ENCODE measurements at regions of chr13 and their contacts with region 1.

Region 1: DNA sequence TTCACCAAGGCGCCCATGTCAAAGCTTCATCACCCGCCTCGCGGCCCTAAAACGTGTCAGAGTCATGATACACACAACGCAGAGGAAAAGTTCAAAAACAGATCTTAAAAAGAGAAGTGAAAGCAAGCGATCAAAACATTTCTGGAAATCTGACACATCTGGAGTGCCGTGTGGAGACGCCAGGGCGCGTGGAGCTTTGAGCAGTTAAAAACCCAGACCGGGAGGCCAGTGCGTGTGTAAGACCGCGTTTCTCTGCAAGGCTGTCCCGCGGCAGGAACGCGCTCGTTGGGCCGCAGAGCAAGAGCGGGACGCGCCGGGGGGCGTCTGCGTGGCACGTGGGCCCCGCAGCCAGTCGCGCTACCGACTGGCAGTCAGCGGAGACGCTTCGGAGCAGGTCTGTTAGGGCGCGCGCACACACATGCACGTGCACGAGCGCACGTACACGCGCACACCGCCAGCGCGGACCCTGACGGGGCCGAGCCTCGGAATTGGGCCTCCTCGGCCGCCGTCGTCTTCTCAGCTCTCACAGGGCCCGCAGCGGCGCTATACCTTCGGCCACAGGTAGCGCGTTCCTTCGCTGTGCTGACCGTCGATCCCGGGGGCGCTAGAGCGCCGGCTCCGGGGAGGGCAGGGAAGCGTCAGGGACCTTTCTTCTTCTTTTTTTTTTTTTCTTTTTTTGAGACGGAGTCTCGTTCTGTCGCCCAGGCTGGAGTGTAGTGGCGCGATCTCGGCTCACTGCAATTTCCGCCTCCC is 35.8 kb downstream of the RNF6 start:
- DNase-seq: peak; percentile 66
- ATAC-seq: peak; percentile 93
- H3K4me3 ChIP-seq: peak overlapping the region; percentile 74
- H3K27ac ChIP-seq: peak overlapping the region; percentile 39
- H3K4me1 ChIP-seq: peaks cover 9% of the 10 kb centered on the region
- H3K27me3 ChIP-seq: no peaks in the 10 kb centered on the region
- CTCF ChIP-seq: peak; percentile 54 to 65 (median 60)
- EP300 ChIP-seq: no peak
- POLR2A ChIP-seq: peak; percentile 90
- RAD21 ChIP-seq: peak; percentile 49

Region 2: DNA sequence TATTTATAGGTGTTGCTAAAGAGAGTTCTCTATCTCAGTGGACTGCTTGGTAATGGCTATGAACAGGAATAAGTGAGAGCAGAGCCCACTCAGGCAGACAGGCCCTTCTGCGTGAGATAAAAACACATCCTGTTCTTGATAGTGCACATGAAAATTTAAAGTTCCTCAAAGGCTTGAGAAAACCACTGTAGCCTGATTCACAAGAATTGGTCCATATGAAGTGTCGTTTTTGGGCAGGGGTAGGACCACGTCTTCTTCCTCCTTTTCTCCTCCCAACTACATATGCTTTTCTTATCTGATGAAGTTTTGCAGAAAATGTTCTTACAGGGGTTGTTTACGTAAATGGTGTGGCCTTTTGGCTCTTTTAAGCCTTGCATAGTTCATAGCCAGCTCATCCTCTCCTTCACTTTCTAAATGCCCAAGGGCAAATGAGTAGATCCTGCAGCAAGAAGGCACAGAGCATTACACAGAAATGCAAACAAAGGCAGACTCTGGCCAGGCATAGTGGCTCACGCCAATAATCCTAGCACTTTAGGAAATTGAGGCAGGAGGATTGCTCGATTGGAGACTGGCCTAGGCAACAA is 18.0 kb before region 1 on chr13:
- CTCF ChIA-PET with region 1: interaction called, 10 read pairs
- POLR2A ChIA-PET with region 1: no interaction called
- RAD21 ChIA-PET with region 1: no interaction called
- SMC1A ChIA-PET with region 1: interaction called, 4 read pairs
- in situ Hi-C with region 1: no loop called
- intact Hi-C with region 1: no loop called
- DNase-seq: no peak
- ATAC-seq: no peak
- H3K4me3 ChIP-seq: no peak overlapping the region
- H3K27ac ChIP-seq: no peak overlapping the region
- H3K4me1 ChIP-seq: no peaks in the 10 kb centered on the region
- H3K27me3 ChIP-seq: peaks cover 0 to 1% of the 10 kb centered on the region in 2 experiments; a peak in 1 of 4 replicates
- CTCF ChIP-seq: no peak
- EP300 ChIP-seq: no peak
- POLR2A ChIP-seq: no peak
- RAD21 ChIP-seq: no peak

Region 3: GRCh38 chr13:26221721-26222519 is 35.6 kb after region 1 on chr13 and contains the start of gene RNF6:
- CTCF ChIA-PET with region 1: interaction called, 48 read pairs
- POLR2A ChIA-PET with region 1: interaction called, 3 read pairs
- RAD21 ChIA-PET with region 1: interaction called, 4 read pairs
- SMC1A ChIA-PET with region 1: interaction called, 3 read pairs
- in situ Hi-C with region 1: no loop called
- intact Hi-C with region 1: loop called (anchors 2 kb)
- DNase-seq: peak; percentile 96
- ATAC-seq: peak; percentile 98
- H3K4me3 ChIP-seq: peak within 1 kb of the TSS; percentile 86
- H3K27ac ChIP-seq: peak within 1 kb of the TSS; percentile 99
- H3K4me1 ChIP-seq: peaks cover 4% of the 10 kb centered on the region
- H3K27me3 ChIP-seq: no peaks in the 10 kb centered on the region; a peak in 1 of 4 replicates
- CTCF ChIP-seq: no peak
- EP300 ChIP-seq: no peak
- POLR2A ChIP-seq: peak; percentile 97
- RAD21 ChIP-seq: no peak
- polyA plus RNA-seq, gene RNF6: 19.0 to 26.8 TPM

Region 4: GRCh38 chr13:26390203-26390602 is 203.9 kb after region 1 on chr13:
- CTCF ChIA-PET with region 1: interaction called, 12 read pairs
- POLR2A ChIA-PET with region 1: no interaction called
- RAD21 ChIA-PET with region 1: interaction called, 3 read pairs
- SMC1A ChIA-PET with region 1: no interaction called
- in situ Hi-C with region 1: no loop called
- intact Hi-C with region 1: no loop called
- DNase-seq: no peak
- ATAC-seq: no peak
- H3K4me3 ChIP-seq: no peak overlapping the region
- H3K27ac ChIP-seq: no peak overlapping the region
- H3K4me1 ChIP-seq: no peaks in the 10 kb centered on the region
- H3K27me3 ChIP-seq: no peaks in the 10 kb centered on the region
- CTCF ChIP-seq: no peak
- EP300 ChIP-seq: no peak
- POLR2A ChIP-seq: no peak
- RAD21 ChIP-seq: no peak

Region 5: DNA sequence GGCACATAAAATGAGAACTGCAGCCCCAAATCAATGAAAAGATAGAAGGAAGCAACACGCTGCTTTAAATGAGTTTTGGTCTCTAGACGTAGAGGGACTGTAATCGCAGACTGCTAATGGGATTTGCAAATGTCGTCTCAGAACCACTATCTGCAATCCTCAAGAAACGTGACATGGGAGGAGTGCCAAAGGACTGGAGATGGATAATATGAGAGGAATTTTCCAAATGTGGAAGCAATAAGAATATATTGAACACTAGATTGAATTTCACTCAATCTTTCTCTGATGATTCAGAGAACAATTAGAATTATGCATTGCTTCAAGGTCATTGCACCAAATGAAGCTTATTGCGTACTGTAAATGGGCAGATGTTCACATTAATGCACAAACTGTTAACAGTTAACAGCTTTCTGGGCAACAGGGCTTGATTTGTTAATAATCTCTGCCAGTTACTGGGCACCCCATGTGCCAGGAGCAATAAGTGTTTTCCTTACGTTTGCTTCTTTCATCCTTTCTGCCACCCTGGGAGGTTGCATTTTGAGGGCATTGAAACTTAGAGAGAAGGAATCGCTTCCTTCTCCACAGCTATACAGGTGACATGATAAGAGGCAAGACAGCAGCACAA is 308.4 kb after region 1 on chr13:
- CTCF ChIA-PET with region 1: interaction called, 218 read pairs
- POLR2A ChIA-PET with region 1: interaction called, 5 read pairs
- RAD21 ChIA-PET with region 1: interaction called, 76 read pairs
- SMC1A ChIA-PET with region 1: interaction called, 70 read pairs
- in situ Hi-C with region 1: loop called (anchors 5 kb)
- intact Hi-C with region 1: loop called (anchors 1 kb)
- DNase-seq: no peak
- ATAC-seq: no peak
- H3K4me3 ChIP-seq: no peak overlapping the region
- H3K27ac ChIP-seq: no peak overlapping the region
- H3K4me1 ChIP-seq: no peaks in the 10 kb centered on the region
- H3K27me3 ChIP-seq: no peaks in the 10 kb centered on the region; a peak in 1 of 4 replicates
- CTCF ChIP-seq: no peak
- EP300 ChIP-seq: no peak
- POLR2A ChIP-seq: no peak
- RAD21 ChIP-seq: no peak

Region 6: GRCh38 chr13:26698392-26699196 is 512.3 kb after region 1 on chr13:
- CTCF ChIA-PET with region 1: interaction called, 63 read pairs
- POLR2A ChIA-PET with region 1: no interaction called
- RAD21 ChIA-PET with region 1: interaction called, 34 read pairs
- SMC1A ChIA-PET with region 1: interaction called, 25 read pairs
- in situ Hi-C with region 1: loop called (anchors 5 kb)
- intact Hi-C with region 1: loop called (anchors 1 kb)
- DNase-seq: peak; percentile 20
- ATAC-seq: peak; percentile 88
- H3K4me3 ChIP-seq: no peak overlapping the region
- H3K27ac ChIP-seq: no peak overlapping the region
- H3K4me1 ChIP-seq: no peaks in the 10 kb centered on the region
- H3K27me3 ChIP-seq: no peaks in the 10 kb centered on the region
- CTCF ChIP-seq: peak; percentile 89 to 96 (median 91)
- EP300 ChIP-seq: no peak
- POLR2A ChIP-seq: no peak
- RAD21 ChIP-seq: peak; percentile 91

Measured in GM12878 (cell line).